ENCODE measurements at regions of chr6 and their contacts with region 1.

Region 1: DNA sequence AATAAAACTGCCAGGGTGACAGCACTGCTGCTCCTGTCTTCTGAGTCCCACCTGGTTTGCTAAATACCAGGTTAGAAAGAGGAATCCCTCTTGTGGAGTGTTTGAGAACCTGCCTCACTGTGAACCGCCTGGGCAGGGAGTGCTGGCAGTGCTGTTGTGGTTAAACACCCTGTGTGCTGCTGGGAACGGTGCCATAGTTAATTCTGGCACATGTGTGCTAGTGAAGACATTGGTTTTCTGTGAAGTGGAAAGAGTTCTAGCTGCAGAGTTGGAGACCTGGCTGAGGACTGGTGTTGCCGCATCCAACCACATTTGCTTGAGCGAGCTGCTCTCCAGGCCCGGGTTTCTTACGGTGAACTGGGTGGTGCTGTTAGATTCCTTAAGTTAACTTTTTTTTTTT is 72.7 kb downstream of the IGF2R start:
- DNase-seq: peak; percentile 79
- ATAC-seq: peak; percentile 91

Region 2: GRCh38 chr6:159968440-159969203 is 73.0 kb before region 1 on chr6 and contains the start of gene IGF2R:
- intact Hi-C with region 1: loop called (anchors 5 kb)
- DNase-seq: peak; percentile 96
- ATAC-seq: peak; percentile 95
- total RNA-seq, gene IGF2R: 68.4 TPM

Region 3: DNA sequence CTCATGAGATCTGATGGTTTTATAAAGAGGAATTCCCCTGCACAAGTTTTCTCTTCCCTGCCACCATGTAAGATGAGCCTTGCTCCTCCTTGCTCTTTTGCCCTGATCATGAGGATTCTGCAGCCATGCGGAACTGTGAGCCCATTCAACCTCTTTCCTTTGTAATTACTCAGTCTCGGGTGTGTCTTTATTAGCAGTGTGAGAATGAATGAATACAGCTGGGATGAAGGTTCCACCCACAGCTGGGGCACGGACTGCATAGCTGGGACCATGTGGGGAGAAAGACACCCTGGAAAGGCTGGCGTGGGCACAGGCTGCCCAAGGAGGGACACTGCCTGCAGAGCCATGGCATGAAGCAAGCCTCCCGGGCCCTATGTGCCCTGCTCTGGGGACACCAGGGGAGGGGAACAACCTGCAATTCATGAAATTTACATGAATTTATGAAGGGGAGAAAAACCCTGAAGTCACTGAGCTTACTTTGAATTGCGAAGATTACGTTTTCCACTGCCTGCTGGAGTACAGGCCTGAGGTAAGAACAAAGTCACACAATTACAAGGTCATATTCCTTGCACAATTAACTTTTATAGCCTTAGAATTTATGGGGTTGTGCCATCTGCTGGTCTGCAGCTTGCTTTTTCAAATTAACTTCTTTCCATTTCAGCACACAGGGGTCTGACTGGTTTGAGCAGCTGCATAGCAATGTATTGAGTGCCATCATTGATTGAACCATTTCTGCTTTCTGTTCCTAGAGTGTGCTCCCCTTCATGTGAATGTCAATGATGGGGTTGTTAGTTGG is 126.2 kb after region 1 on chr6:
- intact Hi-C with region 1: no loop called
- DNase-seq: no peak
- ATAC-seq: no peak

Region 4: DNA sequence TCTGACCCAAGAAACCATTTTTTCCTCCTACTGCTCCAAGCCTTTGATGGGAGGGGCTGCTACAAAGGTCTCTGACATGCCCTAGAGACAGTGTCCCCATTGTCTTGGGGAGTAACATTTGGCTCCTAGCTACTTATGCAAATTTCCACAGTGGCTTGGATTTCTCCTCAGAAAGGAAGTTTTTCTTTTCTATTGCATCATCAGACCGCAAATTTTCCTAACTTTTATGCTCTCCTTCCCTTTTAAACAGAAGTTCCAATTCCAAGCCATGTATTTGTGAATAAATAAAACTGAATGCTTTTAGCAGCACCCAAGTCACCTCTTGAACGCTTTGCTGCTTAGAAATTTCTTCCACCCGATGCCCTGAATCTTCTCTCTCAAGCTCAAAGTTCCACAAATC is 166.0 kb after region 1 on chr6:
- intact Hi-C with region 1: no loop called
- DNase-seq: no peak
- ATAC-seq: no peak